ENCODE measurements at regions of chr14 and their contacts with region 1.

Region 1: DNA sequence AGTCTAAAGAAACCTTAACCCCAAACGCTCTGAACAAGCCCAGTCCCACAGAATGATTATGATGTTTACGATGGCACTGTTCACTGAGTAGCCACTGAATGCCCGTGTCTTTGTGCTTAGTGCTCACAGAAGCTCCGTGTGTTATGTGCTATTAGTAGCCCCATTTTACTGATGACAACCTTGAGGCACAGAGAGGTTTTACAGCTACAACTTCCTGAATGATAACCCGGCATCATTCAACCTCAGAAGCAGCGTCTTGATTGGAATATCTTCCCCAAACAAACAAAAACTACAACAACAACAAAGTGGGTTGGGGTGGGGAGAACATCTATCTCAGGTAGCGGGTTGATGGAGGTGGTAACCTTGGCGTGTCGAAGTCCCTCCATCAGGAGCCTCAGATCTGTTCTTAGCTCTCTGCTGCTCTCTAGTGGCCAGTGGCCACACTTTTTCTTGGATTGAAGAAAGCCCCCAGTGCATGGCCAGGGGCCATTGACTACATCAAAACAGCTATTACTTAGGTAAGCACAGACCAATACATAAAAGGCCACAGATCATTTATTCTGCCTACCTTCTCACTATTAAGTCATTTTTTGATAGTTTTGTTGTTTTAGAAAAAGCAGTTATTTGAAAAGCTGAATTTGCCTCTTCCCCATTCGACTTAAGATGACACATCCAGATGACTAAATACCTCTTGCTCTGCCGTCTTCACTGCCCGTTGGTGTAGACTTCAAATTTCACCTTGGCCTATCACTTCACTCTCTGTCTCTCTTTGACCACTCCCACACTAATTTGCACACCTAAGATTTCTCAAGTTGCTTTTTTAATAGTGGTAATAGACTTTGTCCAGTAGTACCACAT is 376.9 kb downstream of the GALC start:
- DNase-seq: no peak

Region 2: GRCh38 chr14:86902176-86902950 is 713.7 kb before region 1 on chr14:
- intact Hi-C with region 1: loop called in 1 of 2 experiments (anchors 10 kb)
- DNase-seq: no peak

Measured in posterior vena cava (tissue), 2 donors.